Right ventricle myocardium inferior (tissue), 1 donor: ENCODE measurements at regions of chr21 and their contacts with region 1.

Region 1: GRCh38 chr21:38505654-38506515 is 7.6 kb upstream of the ERG start:
- DNase-seq: no peak
- ATAC-seq: peak; percentile 70

Region 2: GRCh38 chr21:38170280-38170679 is 335.6 kb before region 1 on chr21:
- intact Hi-C with region 1: loop called (anchors 5 kb)
- DNase-seq: no peak
- ATAC-seq: no peak

Region 3: DNA sequence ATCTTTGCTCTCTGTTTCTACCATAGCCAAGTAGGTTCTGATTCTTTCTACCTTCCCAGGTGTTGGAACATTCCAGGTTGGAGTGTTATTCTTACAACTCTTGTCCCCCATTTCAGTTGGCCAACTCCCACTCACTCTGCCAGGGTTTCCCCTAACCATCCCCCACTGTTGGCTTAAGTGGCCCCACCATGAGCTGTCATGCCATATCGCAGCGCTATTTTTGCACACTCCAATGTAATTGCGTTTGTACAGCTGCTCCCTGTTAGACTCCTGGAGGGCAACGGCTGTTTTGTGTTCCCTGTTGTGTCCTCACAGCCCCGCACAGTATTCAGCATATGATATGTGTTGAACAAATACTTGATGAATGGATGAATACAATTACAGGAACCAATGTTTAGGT is 182.2 kb after region 1 on chr21:
- intact Hi-C with region 1: no loop called
- DNase-seq: no peak
- ATAC-seq: no peak

Region 4: DNA sequence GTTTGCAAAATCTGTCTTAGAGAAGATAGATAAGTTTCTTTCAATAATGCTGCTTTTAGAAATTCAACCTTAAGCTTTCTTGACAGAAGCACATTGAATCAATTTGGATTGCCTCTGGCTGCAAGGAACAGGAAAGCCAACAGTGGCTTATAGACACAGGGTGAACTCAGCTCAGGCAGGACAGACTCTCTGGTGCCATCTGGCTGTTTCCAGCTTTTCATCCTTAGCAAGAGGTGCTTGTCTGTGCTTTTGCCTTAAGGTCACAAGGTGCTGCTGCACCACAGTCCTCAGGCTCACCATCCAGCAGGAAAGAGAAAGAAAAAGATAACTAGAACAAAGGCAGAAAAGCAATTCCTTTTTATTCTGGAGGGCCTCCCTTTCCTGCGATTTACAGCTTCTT is 206.2 kb after region 1 on chr21:
- intact Hi-C with region 1: loop called (anchors 1 kb)
- DNase-seq: no peak
- ATAC-seq: no peak

Region 5: DNA sequence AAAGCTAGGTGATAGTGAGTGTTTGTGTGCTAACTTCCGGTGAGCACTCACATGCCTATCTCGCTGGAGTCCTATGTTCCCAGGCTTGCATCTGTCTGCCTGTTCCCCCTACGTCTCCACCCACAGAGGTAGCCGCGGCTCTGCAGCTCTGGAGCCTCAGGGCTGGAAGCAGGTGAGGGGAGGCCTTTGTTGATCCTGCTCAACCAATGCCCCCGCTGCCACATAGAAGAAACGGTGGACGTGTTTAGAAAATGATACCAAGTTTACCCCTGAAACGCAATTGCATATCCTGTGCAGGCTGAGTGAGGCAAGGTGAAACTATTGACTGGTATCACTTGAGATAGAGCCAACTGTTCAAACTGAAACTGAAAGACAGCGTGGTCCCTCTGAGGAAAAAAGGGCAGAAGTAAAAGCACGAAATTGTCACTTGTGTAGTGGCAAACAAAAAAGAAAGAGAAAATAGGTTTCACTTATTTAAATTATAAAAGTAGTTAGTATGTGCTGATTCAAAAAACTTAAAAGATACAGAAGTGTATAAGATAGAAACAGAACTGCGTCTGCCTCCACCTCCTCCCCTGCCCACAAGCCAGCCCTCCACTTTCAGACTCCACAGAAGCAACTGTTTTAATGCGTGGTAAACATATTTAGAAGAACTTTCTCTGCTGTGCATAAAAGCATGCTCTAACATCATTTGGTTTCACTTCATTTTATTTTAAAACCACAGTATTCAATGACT is 261.3 kb after region 1 on chr21:
- intact Hi-C with region 1: no loop called
- DNase-seq: no peak
- ATAC-seq: no peak

Region 6: GRCh38 chr21:39137248-39138178 is 631.6 kb after region 1 on chr21:
- intact Hi-C with region 1: loop called (anchors 5 kb)
- DNase-seq: no peak
- ATAC-seq: no peak